Prostate gland (tissue), 2 donors: ENCODE measurements at regions of chr3 and their contacts with region 1.

Region 1: DNA sequence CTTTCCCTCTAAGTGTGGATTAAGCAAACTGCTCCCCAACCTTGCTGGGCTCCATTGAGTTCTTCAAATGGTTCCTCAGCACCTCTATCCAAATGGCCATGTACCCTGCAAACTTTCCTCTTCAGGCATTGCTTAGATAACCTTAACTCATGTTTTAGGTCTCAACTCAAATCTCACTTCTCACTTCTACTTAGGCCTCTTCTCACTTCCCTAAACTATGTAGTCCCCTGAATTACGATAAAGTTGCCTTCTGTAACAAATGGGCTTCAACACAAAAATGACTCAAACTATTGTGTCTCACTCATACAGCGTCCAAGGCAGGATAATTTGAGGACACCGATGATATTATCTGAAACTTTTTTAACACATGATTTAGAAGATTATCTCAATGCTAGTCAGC is 62.4 kb upstream of the STAC start:
- DNase-seq: no peak
- H3K4me3 ChIP-seq: no peak overlapping the region
- H3K27ac ChIP-seq: no peak overlapping the region
- H3K4me1 ChIP-seq: no peaks in the 10 kb centered on the region
- H3K27me3 ChIP-seq: no peaks in the 10 kb centered on the region
- CTCF ChIP-seq: no peak
- POLR2A ChIP-seq: no peak

Region 2: DNA sequence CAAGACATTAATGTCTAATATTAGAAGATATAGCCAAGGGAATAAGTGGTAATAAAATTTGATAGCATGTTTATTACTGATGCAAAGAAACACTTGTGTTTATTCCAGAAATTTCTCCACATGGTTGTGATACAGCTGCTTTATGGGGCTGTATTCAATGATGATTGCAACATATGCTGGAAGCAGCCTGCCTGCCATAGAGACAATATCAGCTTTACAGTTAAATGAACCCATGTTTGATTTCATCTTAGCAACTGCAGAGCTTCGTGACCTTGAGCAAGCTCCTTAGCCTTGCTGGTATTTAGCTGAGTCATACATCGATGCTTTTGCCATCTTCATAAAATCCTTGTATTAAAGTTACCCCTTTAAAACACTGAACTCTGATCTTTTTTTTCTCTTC is 105.7 kb before region 1 on chr3:
- intact Hi-C with region 1: loop called (anchors 10 kb)
- DNase-seq: no peak
- H3K4me3 ChIP-seq: no peak overlapping the region
- H3K27ac ChIP-seq: no peak overlapping the region
- H3K4me1 ChIP-seq: no peaks in the 10 kb centered on the region
- H3K27me3 ChIP-seq: no peaks in the 10 kb centered on the region
- CTCF ChIP-seq: no peak
- POLR2A ChIP-seq: no peak

Region 3: GRCh38 chr3:36232797-36233489 is 85.0 kb before region 1 on chr3:
- intact Hi-C with region 1: no loop called
- DNase-seq: no peak
- H3K4me3 ChIP-seq: no peak overlapping the region
- H3K27ac ChIP-seq: no peak overlapping the region
- H3K4me1 ChIP-seq: no peaks in the 10 kb centered on the region
- H3K27me3 ChIP-seq: no peaks in the 10 kb centered on the region
- CTCF ChIP-seq: no peak
- POLR2A ChIP-seq: no peak

Region 4: GRCh38 chr3:36501616-36502015 is 183.7 kb after region 1 on chr3:
- intact Hi-C with region 1: loop called (anchors 10 kb)
- DNase-seq: no peak
- H3K4me3 ChIP-seq: no peak overlapping the region
- H3K27ac ChIP-seq: no peak overlapping the region
- H3K4me1 ChIP-seq: no peaks in the 10 kb centered on the region
- H3K27me3 ChIP-seq: no peaks in the 10 kb centered on the region
- CTCF ChIP-seq: no peak
- POLR2A ChIP-seq: no peak